ENCODE measurements at regions of chr5 and their contacts with region 1.

Region 1: GRCh38 chr5:139882961-139883539 is 87.4 kb downstream of the PSD2 start:
- DNase-seq: no peak
- H3K4me3 ChIP-seq: no peak overlapping the region
- H3K27ac ChIP-seq: no peak overlapping the region
- H3K4me1 ChIP-seq: peaks cover 14% of the 10 kb centered on the region
- H3K27me3 ChIP-seq: no peaks in the 10 kb centered on the region
- CTCF ChIP-seq: no peak

Region 2: DNA sequence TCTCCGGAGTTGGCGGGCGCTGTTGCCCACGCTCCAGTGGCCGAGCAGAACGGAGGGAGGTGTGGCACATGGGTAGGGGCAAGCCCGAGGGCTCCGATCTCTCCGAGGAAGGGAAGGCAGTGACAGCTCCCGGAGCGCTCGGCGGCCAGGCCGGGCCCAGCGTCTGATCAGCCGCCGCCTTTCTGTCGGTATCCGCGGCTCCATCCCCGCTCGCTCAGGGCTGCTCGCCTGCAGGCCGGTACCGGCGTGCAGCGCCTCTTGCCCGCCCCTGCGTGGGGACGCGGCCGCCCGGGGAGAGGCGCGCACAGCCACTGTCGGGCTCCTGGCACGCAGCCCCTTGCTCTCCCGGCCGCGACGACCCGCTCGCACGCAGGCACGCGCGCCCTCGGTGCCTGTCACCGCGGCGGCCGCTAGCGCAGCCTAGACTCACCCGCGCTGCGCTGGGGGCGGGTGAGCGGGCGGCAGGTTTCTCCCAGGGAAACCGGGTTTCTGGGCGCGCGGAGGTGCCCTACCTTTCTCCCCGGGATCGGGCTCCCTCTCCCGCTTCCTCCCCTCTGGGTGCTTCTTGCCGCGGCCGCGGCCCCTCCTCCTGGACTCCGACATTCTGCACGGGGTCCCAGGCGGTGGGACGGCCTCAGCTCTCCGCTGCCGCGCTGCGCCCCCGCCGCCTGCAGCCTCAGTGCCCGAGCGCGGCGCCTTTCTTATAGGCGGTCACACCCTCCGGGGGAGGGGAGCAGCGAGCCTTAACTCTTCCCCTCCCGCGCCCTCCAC is 20.9 kb after region 1 on chr5:
- CTCF ChIA-PET with region 1: no interaction called
- POLR2A ChIA-PET with region 1: interaction called, 11 read pairs
- intact Hi-C with region 1: no loop called
- DNase-seq: no peak
- H3K4me3 ChIP-seq: peak overlapping the region; percentile 5; the same call in 1 of the 2 replicates
- H3K27ac ChIP-seq: no peak overlapping the region
- H3K4me1 ChIP-seq: peaks cover 5% of the 10 kb centered on the region; the same call in 1 of the 2 replicates
- H3K27me3 ChIP-seq: peaks cover 31% of the 10 kb centered on the region; the same call in 1 of the 2 replicates
- CTCF ChIP-seq: no peak

Region 3: DNA sequence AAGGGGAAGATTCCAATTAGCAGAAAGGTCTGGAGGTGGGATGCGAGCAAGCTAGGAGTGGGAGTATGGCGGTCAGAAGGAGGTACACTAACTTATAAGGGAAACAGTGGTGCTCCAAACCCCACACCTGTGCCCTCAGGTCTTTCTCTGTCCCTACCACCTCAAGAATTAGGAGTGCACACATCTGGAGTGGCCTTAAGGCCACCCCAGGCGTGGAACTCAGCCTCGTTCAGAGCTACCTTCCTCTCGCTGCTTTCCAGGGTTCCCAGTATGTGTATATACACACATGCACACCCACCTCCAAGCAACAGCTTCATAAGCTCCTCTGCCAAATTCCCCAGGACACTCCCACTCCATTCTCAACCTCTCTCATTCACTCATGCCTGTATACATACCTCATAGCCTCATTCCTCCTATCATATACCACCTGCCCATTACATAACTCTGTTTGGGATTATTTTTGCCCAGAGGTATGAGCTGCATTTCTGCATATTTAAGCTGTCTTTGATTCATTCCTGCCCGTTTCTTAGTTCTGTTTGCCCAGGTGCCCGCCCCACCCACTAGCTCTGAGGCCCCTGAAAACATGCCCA is 31.3 kb after region 1 on chr5:
- CTCF ChIA-PET with region 1: no interaction called
- POLR2A ChIA-PET with region 1: no interaction called
- intact Hi-C with region 1: no loop called
- DNase-seq: peak in 1 of 2 experiments; percentile 89
- H3K4me3 ChIP-seq: no peak overlapping the region
- H3K27ac ChIP-seq: no peak overlapping the region
- H3K4me1 ChIP-seq: peaks cover 16% of the 10 kb centered on the region
- H3K27me3 ChIP-seq: no peaks in the 10 kb centered on the region
- CTCF ChIP-seq: no peak